Heart right ventricle (tissue), 16 donors: ENCODE measurements at regions of chr2 and their contacts with region 1.

Region 1: GRCh38 chr2:233846387-233847247 is 7.7 kb downstream of the HJURP start:
- DNase-seq: no peak
- ATAC-seq: peak in 2 of 8 donors; percentile 42 to 43
- H3K4me3 ChIP-seq: no peak overlapping the region
- H3K27ac ChIP-seq: no peak overlapping the region
- H3K4me1 ChIP-seq: no peaks in the 10 kb centered on the region
- H3K27me3 ChIP-seq: peaks cover 0 to 4% (median 0%) of the 10 kb centered on the region in 7 donors
- CTCF ChIP-seq: no peak

Region 2: GRCh38 chr2:233353769-233354499 is 492.7 kb before region 1 on chr2 and contains the start of gene DGKD:
- intact Hi-C with region 1: loop called in 1 of 10 experiments (anchors 10 kb)
- DNase-seq: peak; percentile 40 to 75
- ATAC-seq: peak; percentile 71 to 91 (median 80)
- H3K4me3 ChIP-seq: peak within 1 kb of the TSS; percentile 54 to 83 (median 72)
- H3K27ac ChIP-seq: peak within 1 kb of the TSS in 6 of 10 donors; percentile 41 to 83 (median 56)
- H3K4me1 ChIP-seq: peaks cover 0 to 79% (median 20%) of the 10 kb centered on the region in 9 donors
- H3K27me3 ChIP-seq: no peaks in the 10 kb centered on the region
- CTCF ChIP-seq: peak in 6 of 9 donors; percentile 18 to 50 (median 30)
- total RNA-seq, gene DGKD: 26.8 to 79.5 (median 44.7) TPM

Region 3: DNA sequence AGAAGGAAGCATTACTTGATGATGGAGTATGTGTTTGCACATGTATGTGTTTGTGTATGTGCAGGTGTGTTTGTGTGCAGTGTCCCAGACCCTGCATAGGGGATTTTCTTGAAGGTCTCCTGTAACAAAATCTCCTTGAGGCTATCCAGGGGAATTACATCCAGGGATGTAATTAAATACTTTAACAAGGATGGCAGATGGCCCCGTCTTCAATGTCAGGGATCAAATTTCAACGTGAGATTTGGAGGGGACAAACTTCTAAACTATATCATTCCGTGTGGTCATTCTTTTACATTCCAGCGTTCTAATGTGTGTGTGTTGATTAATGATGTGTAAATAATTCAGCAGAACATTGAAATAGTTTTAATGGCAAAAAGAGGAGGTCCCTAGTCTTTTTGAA is 171.6 kb before region 1 on chr2:
- intact Hi-C with region 1: no loop called
- DNase-seq: no peak
- ATAC-seq: no peak
- H3K4me3 ChIP-seq: no peak overlapping the region
- H3K27ac ChIP-seq: no peak overlapping the region
- H3K4me1 ChIP-seq: no peaks in the 10 kb centered on the region
- H3K27me3 ChIP-seq: peaks cover 0 to 25% (median 0%) of the 10 kb centered on the region in 7 donors
- CTCF ChIP-seq: no peak